ENCODE measurements at regions of chr4 and their contacts with region 1.

Region 1: DNA sequence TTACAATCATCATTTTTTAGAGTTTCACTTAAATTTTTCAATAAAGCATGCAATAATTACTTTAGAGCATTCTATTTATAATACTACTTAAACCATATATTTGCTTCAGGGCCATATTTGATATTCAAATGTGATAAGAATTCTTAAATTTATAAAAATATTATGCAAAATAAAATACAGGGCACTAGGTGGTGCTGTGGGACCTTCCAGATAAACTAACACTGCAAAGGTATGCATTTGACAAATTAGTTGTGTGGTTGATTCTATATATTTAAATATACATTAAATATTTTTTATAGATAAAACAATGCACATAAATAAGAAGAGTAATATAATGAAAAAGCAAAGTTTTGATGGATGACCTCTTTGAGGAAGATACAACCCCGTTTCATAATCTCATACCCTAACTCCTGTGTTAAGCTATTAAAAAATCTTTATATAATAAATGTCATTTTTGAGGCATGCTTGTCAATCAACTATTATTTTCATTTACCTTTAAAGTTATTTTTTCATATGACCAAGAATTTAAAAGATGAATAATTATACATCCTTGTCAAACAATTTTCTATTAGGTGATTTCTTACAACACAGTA is 128.4 kb downstream of the REELD1 start:
- DNase-seq: peak in 1 of 2 experiments; percentile 29
- H3K4me3 ChIP-seq: no peak overlapping the region
- H3K4me1 ChIP-seq: no peaks in the 10 kb centered on the region
- H3K27me3 ChIP-seq: no peaks in the 10 kb centered on the region

Region 2: DNA sequence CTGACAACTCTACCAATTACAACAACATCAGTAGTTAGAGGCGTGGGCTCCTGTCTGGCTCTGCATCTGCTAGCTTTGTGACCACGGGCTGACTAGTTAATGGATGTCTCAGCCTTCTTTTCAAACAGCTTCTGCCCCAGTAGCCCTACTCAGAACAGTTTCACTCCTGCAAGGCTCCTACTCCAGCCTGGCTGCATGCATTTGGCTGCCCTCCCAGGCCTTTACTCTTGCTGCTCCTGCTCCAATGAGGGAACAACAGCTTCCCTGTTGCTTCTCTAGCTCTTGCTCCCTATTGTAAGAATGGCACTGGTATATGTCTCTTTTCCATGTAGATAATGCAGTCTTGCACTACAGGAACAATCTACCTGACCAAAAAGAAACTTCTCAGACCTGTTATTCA is 509.7 kb after region 1 on chr4:
- in situ Hi-C with region 1: no loop called
- DNase-seq: no peak
- H3K4me3 ChIP-seq: no peak overlapping the region
- H3K4me1 ChIP-seq: no peaks in the 10 kb centered on the region
- H3K27me3 ChIP-seq: no peaks in the 10 kb centered on the region

Region 3: DNA sequence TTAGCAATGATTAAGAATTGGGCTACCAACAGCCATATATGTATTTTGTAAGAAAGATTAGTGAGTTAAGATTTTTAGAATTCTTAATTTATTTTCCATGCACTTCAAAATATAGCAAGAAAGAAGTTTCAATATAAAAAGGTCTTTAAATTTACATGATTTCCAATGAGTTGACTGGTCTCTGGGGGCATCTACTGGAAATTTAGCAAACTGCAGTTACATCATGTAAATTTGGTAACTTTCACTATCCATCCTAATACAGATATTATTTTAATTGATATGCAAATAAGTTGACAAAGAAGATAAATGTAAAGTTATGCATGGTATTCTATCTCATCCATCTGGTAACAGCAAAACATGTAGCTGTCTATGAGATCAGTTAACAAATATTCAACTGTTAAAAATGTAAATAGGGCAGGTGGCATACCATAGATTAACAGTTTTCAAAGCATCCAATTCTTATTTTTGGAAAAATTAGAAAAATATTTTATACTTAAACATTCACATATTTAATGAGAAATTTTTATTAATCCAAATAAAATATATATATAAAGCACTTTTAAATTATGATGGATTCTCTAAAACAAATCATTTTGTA is 573.9 kb after region 1 on chr4:
- in situ Hi-C with region 1: loop called (anchors 25 kb)
- DNase-seq: peak; percentile 23 to 33
- H3K4me3 ChIP-seq: no peak overlapping the region
- H3K4me1 ChIP-seq: no peaks in the 10 kb centered on the region
- H3K27me3 ChIP-seq: no peaks in the 10 kb centered on the region; the same call in 1 of the 2 replicates

Measured in HAP-1 (cell line).